Activated CD4-positive, alpha-beta T cell treated with anti-CD3 and anti-CD28 coated beads for 36 hours (primary cell): ENCODE measurements at regions of chr15 and their contacts with region 1.

Region 1: GRCh38 chr15:85646538-85647091 is 148.1 kb downstream of the KLHL25 start:
- DNase-seq: peak; percentile 48
- ATAC-seq: peak; percentile 84
- H3K4me3 Mint-ChIP-seq: no peak overlapping the region
- H3K27ac Mint-ChIP-seq: peak overlapping the region; percentile 90
- H3K4me1 Mint-ChIP-seq: peaks cover 64% of the 10 kb centered on the region
- H3K27me3 Mint-ChIP-seq: no peaks in the 10 kb centered on the region

Region 2: DNA sequence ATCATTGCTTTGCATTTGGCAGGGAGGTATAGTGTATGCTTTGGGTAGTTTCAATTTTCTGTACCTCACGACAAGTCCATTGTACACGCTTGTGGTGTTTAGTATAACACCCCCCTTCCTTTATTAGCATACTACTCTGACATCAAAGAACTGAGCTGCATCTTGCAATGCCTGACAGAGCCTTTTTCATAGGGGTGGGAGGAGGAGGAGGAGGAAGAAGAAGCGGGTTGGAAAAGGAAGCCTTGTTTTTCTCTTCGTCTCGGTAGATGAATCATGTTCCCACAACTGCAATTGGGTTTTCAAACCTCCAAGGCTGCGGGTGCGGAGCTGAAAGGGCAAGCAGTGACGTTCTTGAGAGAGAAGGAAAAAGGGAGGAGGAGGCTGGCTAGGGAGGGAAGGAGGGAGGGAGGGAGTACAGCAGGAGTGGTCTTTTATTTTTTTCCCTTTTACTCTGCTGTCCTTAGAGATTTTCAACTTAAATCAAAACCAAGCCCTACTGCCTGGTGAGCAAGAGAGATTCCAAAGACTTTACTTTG is 27.6 kb before region 1 on chr15:
- CTCF ChIA-PET with region 1: interaction called, 3 read pairs
- POLR2A ChIA-PET with region 1: interaction called, 5 read pairs
- intact Hi-C with region 1: loop called (anchors 1 to 2 kb)
- DNase-seq: peak; percentile 78
- ATAC-seq: peak; percentile 90
- H3K4me3 Mint-ChIP-seq: no peak overlapping the region
- H3K27ac Mint-ChIP-seq: no peak overlapping the region
- H3K4me1 Mint-ChIP-seq: peaks cover 48% of the 10 kb centered on the region
- H3K27me3 Mint-ChIP-seq: no peaks in the 10 kb centered on the region

Region 3: DNA sequence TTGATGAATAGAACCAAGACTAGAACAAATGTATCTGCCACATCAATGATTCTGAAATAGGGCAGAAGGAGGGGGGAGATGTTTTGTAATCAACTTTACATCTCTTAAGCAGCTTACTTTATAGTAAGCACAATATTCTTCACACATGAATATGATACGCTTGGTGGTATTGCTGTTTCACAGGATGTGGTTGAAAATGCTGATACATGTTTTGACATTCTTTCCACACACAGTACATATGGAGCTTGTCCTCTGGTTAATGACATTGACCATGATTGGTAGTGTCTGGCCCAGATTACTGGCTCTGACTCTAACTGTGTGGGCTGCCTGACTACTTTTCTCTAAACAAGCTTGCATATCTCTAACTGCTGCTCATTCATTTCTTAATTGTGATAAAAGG is 20.8 kb before region 1 on chr15:
- CTCF ChIA-PET with region 1: interaction called, 10 read pairs
- POLR2A ChIA-PET with region 1: interaction called, 5 read pairs
- intact Hi-C with region 1: loop called (anchors 2 kb)
- DNase-seq: peak; percentile 48
- ATAC-seq: peak; percentile 84
- H3K4me3 Mint-ChIP-seq: peak overlapping the region; percentile 22
- H3K27ac Mint-ChIP-seq: peak overlapping the region; percentile 90
- H3K4me1 Mint-ChIP-seq: peaks cover 69% of the 10 kb centered on the region
- H3K27me3 Mint-ChIP-seq: no peaks in the 10 kb centered on the region

Region 4: DNA sequence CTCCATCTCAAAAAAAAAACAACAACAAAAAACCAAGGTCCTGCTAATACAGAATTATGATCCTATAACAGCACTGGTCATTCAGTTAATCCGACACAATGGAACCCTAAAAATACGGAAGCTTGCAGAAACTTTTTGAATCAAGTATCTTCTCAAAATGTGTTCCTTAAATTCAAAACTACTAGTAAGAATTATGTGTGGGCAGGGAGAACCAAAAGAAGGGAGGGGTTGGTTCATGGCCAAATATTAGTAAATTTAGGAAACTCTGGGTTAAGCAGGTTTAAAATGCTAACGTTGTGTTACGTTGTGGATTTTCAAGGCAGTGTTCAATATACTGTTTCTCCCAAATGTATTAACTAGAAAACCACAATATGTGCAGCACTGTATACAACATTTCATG is 32.6 kb after region 1 on chr15:
- CTCF ChIA-PET with region 1: no interaction called
- POLR2A ChIA-PET with region 1: no interaction called
- intact Hi-C with region 1: no loop called
- DNase-seq: no peak
- ATAC-seq: no peak
- H3K4me3 Mint-ChIP-seq: no peak overlapping the region
- H3K27ac Mint-ChIP-seq: no peak overlapping the region
- H3K4me1 Mint-ChIP-seq: peaks cover 18% of the 10 kb centered on the region
- H3K27me3 Mint-ChIP-seq: no peaks in the 10 kb centered on the region

Region 5: GRCh38 chr15:85689729-85690128 is 43.1 kb after region 1 on chr15:
- CTCF ChIA-PET with region 1: interaction called, 3 read pairs
- POLR2A ChIA-PET with region 1: interaction called, 3 read pairs
- intact Hi-C with region 1: loop called in 1 of 2 experiments (anchors 5 kb)
- DNase-seq: peak; percentile 75
- ATAC-seq: peak; percentile 52
- H3K4me3 Mint-ChIP-seq: peak overlapping the region; percentile 78
- H3K27ac Mint-ChIP-seq: peak overlapping the region; percentile 98
- H3K4me1 Mint-ChIP-seq: peaks cover 77% of the 10 kb centered on the region
- H3K27me3 Mint-ChIP-seq: no peaks in the 10 kb centered on the region

Region 6: GRCh38 chr15:85702321-85703101 is 55.9 kb after region 1 on chr15:
- CTCF ChIA-PET with region 1: interaction called, 3 read pairs
- POLR2A ChIA-PET with region 1: interaction called, 6 read pairs
- intact Hi-C with region 1: loop called in 1 of 2 experiments (anchors 1 kb)
- DNase-seq: peak; percentile 46
- ATAC-seq: peak; percentile 53
- H3K4me3 Mint-ChIP-seq: peak overlapping the region; percentile 70
- H3K27ac Mint-ChIP-seq: peak overlapping the region; percentile 94
- H3K4me1 Mint-ChIP-seq: peaks cover 73% of the 10 kb centered on the region
- H3K27me3 Mint-ChIP-seq: no peaks in the 10 kb centered on the region

Region 7: GRCh38 chr15:85707519-85708338 is 61.1 kb after region 1 on chr15:
- CTCF ChIA-PET with region 1: interaction called, 4 read pairs
- POLR2A ChIA-PET with region 1: interaction called, 10 read pairs
- intact Hi-C with region 1: loop called in 1 of 2 experiments (anchors 1 kb)
- DNase-seq: peak; percentile 47
- ATAC-seq: peak; percentile 13
- H3K4me3 Mint-ChIP-seq: peak overlapping the region; percentile 68
- H3K27ac Mint-ChIP-seq: peak overlapping the region; percentile 96
- H3K4me1 Mint-ChIP-seq: peaks cover 90% of the 10 kb centered on the region
- H3K27me3 Mint-ChIP-seq: no peaks in the 10 kb centered on the region